Sciatic nerve (tissue), 2 donors: ENCODE measurements at regions of chr17 and their contacts with region 1.

Region 1: GRCh38 chr17:7561028-7561575 is 617 bp upstream of the SENP3 start:
- DNase-seq: peak; percentile 95
- ATAC-seq: peak; percentile 75

Region 2: GRCh38 chr17:7351665-7352501 is 209.2 kb before region 1 on chr17 and contains the start of gene KCTD11:
- intact Hi-C with region 1: loop called (anchors 10 kb)
- DNase-seq: peak; percentile 95
- ATAC-seq: peak; percentile 66
- total RNA-seq, gene KCTD11: 64.6 TPM

Region 3: GRCh38 chr17:7484067-7484918 is 76.8 kb before region 1 on chr17 and contains the start of gene POLR2A:
- intact Hi-C with region 1: no loop called
- DNase-seq: peak; percentile 99
- ATAC-seq: peak; percentile 89
- total RNA-seq, gene POLR2A: 126 TPM

Region 4: GRCh38 chr17:7515911-7516610 is 45.0 kb before region 1 on chr17:
- intact Hi-C with region 1: loop called (anchors 5 kb)
- DNase-seq: no peak
- ATAC-seq: no peak